HCT116 (cell line): ENCODE measurements at regions of chr10 and their contacts with region 1.

Region 1: GRCh38 chr10:44520651-44521050 is 135.8 kb upstream of the CXCL12 start:
- DNase-seq: no peak
- ATAC-seq: no peak
- H3K4me3 ChIP-seq: no peak overlapping the region
- H3K27ac ChIP-seq: no peak overlapping the region
- H3K4me1 ChIP-seq: no peaks in the 10 kb centered on the region
- H3K27me3 ChIP-seq: peaks cover 4% of the 10 kb centered on the region; the same call in 1 of the 2 replicates
- CTCF ChIP-seq: no peak
- POLR2A ChIP-seq: no peak
- RAD21 ChIP-seq: no peak

Region 2: GRCh38 chr10:44733501-44734488 is 213.1 kb after region 1 on chr10:
- CTCF ChIA-PET with region 1: no interaction called
- POLR2A ChIA-PET with region 1: no interaction called
- RAD21 ChIA-PET with region 1: no interaction called
- intact Hi-C with region 1: loop called (anchors 10 kb)
- DNase-seq: no peak
- ATAC-seq: no peak
- H3K4me3 ChIP-seq: no peak overlapping the region
- H3K27ac ChIP-seq: no peak overlapping the region
- H3K4me1 ChIP-seq: no peaks in the 10 kb centered on the region
- H3K27me3 ChIP-seq: no peaks in the 10 kb centered on the region; the same call in 1 of the 2 replicates
- CTCF ChIP-seq: peak in 2 of 3 experiments; percentile 36 to 37; a peak in 4 of 6 replicates
- POLR2A ChIP-seq: no peak
- RAD21 ChIP-seq: no peak